Activated CD4-positive, alpha-beta T cell treated with anti-CD3 and anti-CD28 coated beads for 36 hours (primary cell): ENCODE measurements at regions of chrX and their contacts with region 1.

Region 1: DNA sequence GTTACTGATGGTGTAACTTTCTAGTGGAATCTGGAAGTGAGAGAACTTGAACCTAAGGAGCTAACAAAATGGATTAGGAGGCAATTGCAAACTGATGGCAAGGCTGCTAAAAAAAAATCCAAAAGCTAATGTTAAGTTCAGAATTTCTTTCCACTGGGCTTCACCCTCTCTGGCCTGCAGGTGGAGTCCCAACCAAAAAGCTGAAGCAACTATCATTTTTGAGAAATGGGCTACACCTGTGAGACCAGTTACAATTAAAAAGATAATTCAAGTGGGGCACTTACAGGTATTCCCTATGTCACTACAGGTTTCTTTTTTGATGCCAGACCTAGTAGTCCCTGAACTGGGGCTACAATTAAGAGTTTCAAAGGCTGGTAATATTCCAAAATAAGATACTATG is 142.1 kb upstream of the FTHL17 start:
- DNase-seq: peak; percentile 10
- ATAC-seq: no peak
- H3K4me3 Mint-ChIP-seq: no peak overlapping the region
- H3K27ac Mint-ChIP-seq: no peak overlapping the region
- H3K4me1 Mint-ChIP-seq: no peaks in the 10 kb centered on the region
- H3K27me3 Mint-ChIP-seq: no peaks in the 10 kb centered on the region

Region 2: DNA sequence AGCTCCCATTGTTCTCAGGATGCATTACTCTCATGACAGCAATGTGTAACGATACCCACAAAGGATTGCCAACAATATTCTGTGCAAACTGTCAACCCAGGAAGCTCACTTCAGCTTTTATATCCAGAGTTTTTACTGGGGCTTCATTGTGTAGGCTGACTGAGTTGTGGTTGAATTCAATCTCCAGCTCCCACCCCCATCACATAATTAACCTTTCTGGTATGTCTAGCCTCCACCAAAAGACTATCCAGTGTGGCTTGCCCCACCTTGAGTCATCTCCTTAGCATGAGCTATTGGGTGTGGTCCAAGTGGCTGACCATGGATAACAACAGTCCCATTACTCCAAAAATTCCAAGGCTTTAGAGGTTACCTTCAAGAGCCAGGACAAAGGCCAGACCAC is 307.2 kb before region 1 on chrX:
- CTCF ChIA-PET with region 1: no interaction called
- POLR2A ChIA-PET with region 1: no interaction called
- intact Hi-C with region 1: no loop called
- DNase-seq: no peak
- ATAC-seq: no peak
- H3K4me3 Mint-ChIP-seq: no peak overlapping the region
- H3K27ac Mint-ChIP-seq: no peak overlapping the region
- H3K4me1 Mint-ChIP-seq: peaks cover 11% of the 10 kb centered on the region
- H3K27me3 Mint-ChIP-seq: no peaks in the 10 kb centered on the region

Region 3: GRCh38 chrX:31423609-31424189 is 209.8 kb after region 1 on chrX:
- CTCF ChIA-PET with region 1: interaction called, 3 read pairs
- POLR2A ChIA-PET with region 1: no interaction called
- intact Hi-C with region 1: loop called in 1 of 2 experiments (anchors 5 kb)
- DNase-seq: peak; percentile 33
- ATAC-seq: no peak
- H3K4me3 Mint-ChIP-seq: no peak overlapping the region
- H3K27ac Mint-ChIP-seq: no peak overlapping the region
- H3K4me1 Mint-ChIP-seq: no peaks in the 10 kb centered on the region
- H3K27me3 Mint-ChIP-seq: no peaks in the 10 kb centered on the region

Region 4: GRCh38 chrX:31658360-31658759 is 444.4 kb after region 1 on chrX:
- CTCF ChIA-PET with region 1: interaction called, 4 read pairs
- POLR2A ChIA-PET with region 1: no interaction called
- intact Hi-C with region 1: loop called in 1 of 2 experiments (anchors 1 kb)
- DNase-seq: no peak
- ATAC-seq: no peak
- H3K4me3 Mint-ChIP-seq: no peak overlapping the region
- H3K27ac Mint-ChIP-seq: no peak overlapping the region
- H3K4me1 Mint-ChIP-seq: no peaks in the 10 kb centered on the region
- H3K27me3 Mint-ChIP-seq: no peaks in the 10 kb centered on the region

Region 5: DNA sequence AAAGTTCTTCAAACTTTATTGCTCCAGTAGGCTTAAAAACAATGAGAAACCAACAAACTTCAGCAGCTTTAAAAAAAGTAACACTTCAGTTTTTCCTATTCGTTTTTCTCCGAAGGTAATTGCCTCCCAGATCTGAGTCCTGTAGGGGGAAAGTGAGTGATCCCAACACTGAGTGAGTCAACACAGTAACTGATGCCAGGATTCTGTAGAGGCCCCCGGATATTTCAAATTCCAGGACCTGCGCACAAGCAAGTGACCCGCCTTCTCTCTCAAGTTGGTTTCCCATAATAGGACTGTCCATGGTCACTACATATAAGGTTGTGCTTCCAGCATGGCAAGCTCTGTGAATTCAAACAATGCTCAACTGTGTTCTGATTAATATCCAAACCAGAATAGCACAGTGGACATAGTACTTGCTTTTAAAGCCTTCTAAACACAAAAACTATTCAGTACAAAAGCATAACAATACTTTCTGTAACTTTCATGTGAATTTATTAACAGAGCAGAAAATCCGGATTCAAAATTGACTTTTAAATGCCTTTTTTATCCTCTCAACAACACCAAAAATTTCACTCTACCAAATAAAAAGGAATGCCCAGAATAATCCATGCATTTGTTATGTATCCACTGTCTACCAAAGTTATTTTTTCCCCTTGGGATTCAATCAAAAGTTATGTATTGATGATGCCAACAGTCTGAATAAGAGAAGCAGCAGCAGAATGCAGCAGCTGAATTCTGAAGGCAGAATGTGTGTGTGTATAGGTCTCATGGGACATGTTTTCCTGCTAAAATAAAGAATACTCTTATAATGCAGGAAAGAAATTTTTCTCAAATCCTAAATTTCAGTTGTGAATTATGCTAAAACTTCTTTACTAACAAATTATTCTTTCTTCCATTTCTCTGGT is 1997.7 kb after region 1 on chrX and contains the start of gene DMD:
- CTCF ChIA-PET with region 1: no interaction called
- POLR2A ChIA-PET with region 1: no interaction called
- intact Hi-C with region 1: no loop called
- DNase-seq: no peak
- ATAC-seq: no peak
- H3K4me3 Mint-ChIP-seq: no peak within 1 kb of the TSS
- H3K27ac Mint-ChIP-seq: no peak within 1 kb of the TSS
- H3K4me1 Mint-ChIP-seq: no peaks in the 10 kb centered on the region
- H3K27me3 Mint-ChIP-seq: no peaks in the 10 kb centered on the region
- total RNA-seq, gene DMD: 0.85 to 1.8 TPM